Panc1 (cell line): ENCODE measurements at regions of chr1 and their contacts with region 1.

Region 1: GRCh38 chr1:226034482-226034881 is 28.0 kb upstream of the H3-3A start:
- DNase-seq: no peak
- ATAC-seq: no peak
- H3K4me3 ChIP-seq: no peak overlapping the region
- H3K27ac ChIP-seq: no peak overlapping the region
- H3K4me1 ChIP-seq: no peaks in the 10 kb centered on the region
- H3K27me3 ChIP-seq: no peaks in the 10 kb centered on the region
- CTCF ChIP-seq: no peak

Region 2: GRCh38 chr1:225806249-225806648 is 228.2 kb before region 1 on chr1:
- CTCF ChIA-PET with region 1: no interaction called
- POLR2A ChIA-PET with region 1: no interaction called
- in situ Hi-C with region 1: no loop called
- intact Hi-C with region 1: no loop called
- DNase-seq: no peak
- ATAC-seq: no peak
- H3K4me3 ChIP-seq: no peak overlapping the region
- H3K27ac ChIP-seq: no peak overlapping the region
- H3K4me1 ChIP-seq: peaks cover 9% of the 10 kb centered on the region
- H3K27me3 ChIP-seq: no peaks in the 10 kb centered on the region
- CTCF ChIP-seq: no peak

Region 3: GRCh38 chr1:226062558-226063223 is 28.2 kb after region 1 on chr1 and contains the start of gene H3-3A:
- CTCF ChIA-PET with region 1: no interaction called
- POLR2A ChIA-PET with region 1: no interaction called
- in situ Hi-C with region 1: no loop called
- intact Hi-C with region 1: no loop called
- DNase-seq: no peak
- ATAC-seq: peak; percentile 88
- H3K4me3 ChIP-seq: peak within 1 kb of the TSS; percentile 97 to 99
- H3K27ac ChIP-seq: peak within 1 kb of the TSS; percentile 97
- H3K4me1 ChIP-seq: peaks cover 31% of the 10 kb centered on the region
- H3K27me3 ChIP-seq: no peaks in the 10 kb centered on the region
- CTCF ChIP-seq: no peak
- total RNA-seq, gene H3-3A: 404 TPM

Region 4: DNA sequence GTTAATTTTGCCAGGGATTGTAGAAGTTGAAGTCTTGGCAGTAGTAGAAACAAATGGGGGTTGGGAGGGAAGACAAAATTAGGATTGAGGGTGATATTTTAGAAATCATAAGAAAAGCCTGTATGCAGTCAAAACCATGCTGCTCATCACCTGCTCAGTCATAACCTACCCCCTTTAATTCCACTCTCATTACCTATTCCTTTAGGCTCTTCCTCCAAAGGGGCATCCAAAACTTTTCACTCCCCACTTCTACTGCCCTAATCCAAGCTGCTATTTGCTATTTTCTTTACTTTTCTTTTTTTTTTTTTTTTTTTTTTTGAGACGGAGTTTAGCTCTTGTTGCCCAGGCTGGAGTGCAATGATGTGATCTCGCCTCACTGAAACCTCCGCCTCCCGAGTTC is 39.6 kb after region 1 on chr1:
- CTCF ChIA-PET with region 1: no interaction called
- POLR2A ChIA-PET with region 1: interaction called, 12 read pairs
- in situ Hi-C with region 1: no loop called
- intact Hi-C with region 1: no loop called
- DNase-seq: no peak
- ATAC-seq: no peak
- H3K4me3 ChIP-seq: no peak overlapping the region
- H3K27ac ChIP-seq: no peak overlapping the region
- H3K4me1 ChIP-seq: no peaks in the 10 kb centered on the region
- H3K27me3 ChIP-seq: no peaks in the 10 kb centered on the region
- CTCF ChIP-seq: no peak

Region 5: GRCh38 chr1:226157761-226158316 is 123.4 kb after region 1 on chr1:
- CTCF ChIA-PET with region 1: no interaction called
- POLR2A ChIA-PET with region 1: interaction called, 13 read pairs
- in situ Hi-C with region 1: no loop called
- intact Hi-C with region 1: no loop called
- DNase-seq: no peak
- ATAC-seq: no peak
- H3K4me3 ChIP-seq: no peak overlapping the region
- H3K27ac ChIP-seq: no peak overlapping the region
- H3K4me1 ChIP-seq: no peaks in the 10 kb centered on the region
- H3K27me3 ChIP-seq: no peaks in the 10 kb centered on the region
- CTCF ChIP-seq: no peak